WTC11 (cell line): ENCODE measurements at regions of chr2 and their contacts with region 1.

Region 1: DNA sequence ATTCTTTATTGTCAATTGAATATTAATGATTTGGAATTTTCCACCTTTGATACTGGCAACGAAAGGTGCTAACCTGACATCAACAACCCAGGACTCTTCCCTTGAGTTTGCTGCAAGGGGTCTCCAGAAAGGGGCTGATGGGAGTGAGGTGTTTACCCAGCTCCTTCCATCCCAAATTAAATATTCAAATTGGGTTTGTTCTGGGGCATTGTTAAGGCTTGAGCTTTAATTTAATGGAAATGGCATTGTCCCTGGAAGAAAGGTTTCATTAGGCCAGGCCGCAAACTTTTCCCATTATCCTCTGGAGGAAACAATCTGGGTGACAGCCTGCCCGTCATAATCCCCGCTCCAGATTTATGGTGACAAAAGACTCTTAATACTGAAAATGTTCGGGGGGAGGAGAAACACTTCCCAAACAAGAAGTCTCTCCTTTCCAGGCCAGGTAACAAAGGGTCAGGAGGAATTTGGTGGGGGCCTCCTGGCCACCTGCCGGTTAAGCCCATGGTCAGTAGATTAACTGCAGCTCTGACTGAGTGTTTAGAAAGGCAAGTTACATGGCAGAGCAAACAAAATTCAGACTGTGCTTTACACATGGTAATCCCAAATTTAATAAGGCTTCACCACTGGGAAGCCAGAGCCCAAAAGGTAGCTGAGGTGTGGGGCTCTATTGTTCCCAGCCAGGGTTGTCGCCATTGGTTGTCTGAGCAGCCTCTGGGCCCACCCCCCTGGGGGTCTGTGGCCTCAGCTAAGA is 151.4 kb upstream of the SIX3 start:
- DNase-seq: no peak
- ATAC-seq: peak; percentile 81
- H3K4me3 Mint-ChIP-seq: no peak overlapping the region
- H3K27ac Mint-ChIP-seq: peak overlapping the region; percentile 26
- H3K4me1 Mint-ChIP-seq: peaks cover 42% of the 10 kb centered on the region
- H3K27me3 Mint-ChIP-seq: no peaks in the 10 kb centered on the region; the same call in none of the 2 replicates
- CTCF ChIP-seq: no peak

Region 2: GRCh38 chr2:44778671-44779476 is 11.3 kb before region 1 on chr2:
- CTCF ChIA-PET with region 1: interaction called, 8 read pairs
- POLR2A ChIA-PET with region 1: interaction called, 10 read pairs
- DNase-seq: peak; percentile 64
- ATAC-seq: peak; percentile 72
- H3K4me3 Mint-ChIP-seq: peak overlapping the region; percentile 66
- H3K27ac Mint-ChIP-seq: peak overlapping the region; percentile 92
- H3K4me1 Mint-ChIP-seq: peaks cover 57% of the 10 kb centered on the region
- H3K27me3 Mint-ChIP-seq: peaks cover 22% of the 10 kb centered on the region
- CTCF ChIP-seq: no peak

Region 3: DNA sequence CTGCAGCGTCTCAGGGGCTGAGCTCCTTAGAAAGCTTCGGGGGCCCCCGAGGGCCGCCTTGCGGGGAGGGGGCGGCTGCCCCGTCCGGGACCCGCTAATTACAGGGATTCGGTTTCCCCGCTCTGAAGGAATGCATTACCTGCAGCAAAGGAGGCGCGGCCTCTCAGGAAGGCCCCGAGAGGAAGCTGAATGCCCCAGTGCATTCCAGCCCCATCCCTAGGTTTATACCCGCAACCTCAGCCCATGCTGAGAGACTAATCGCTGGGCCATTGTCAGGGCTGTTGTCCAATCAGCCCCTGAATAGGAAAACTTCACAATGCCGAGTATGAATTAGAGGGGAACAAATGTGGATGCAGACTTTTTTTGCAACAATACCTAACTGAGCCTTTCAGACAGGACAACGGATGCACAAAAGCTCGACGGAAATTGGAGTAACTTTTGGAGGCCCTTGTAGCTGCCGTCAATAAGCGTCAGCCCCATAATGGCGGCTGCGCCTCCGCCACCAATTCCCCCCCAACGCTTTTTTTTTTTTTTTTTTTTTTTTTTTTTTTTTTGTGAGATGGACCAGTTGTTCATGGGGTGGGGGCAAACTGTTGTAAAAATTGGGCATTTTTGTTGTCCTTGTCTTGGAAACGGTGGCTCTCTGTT is 12.8 kb after region 1 on chr2:
- CTCF ChIA-PET with region 1: interaction called, 8 read pairs
- POLR2A ChIA-PET with region 1: interaction called, 26 read pairs
- DNase-seq: peak; percentile 92
- ATAC-seq: peak; percentile 75
- H3K4me3 Mint-ChIP-seq: peak overlapping the region; percentile 70
- H3K27ac Mint-ChIP-seq: peak overlapping the region; percentile 98
- H3K4me1 Mint-ChIP-seq: peaks cover 82% of the 10 kb centered on the region
- H3K27me3 Mint-ChIP-seq: peaks cover 53% of the 10 kb centered on the region
- CTCF ChIP-seq: no peak